Heart left ventricle (tissue), 16 donors: ENCODE measurements at regions of chr5 and their contacts with region 1.

Region 1: DNA sequence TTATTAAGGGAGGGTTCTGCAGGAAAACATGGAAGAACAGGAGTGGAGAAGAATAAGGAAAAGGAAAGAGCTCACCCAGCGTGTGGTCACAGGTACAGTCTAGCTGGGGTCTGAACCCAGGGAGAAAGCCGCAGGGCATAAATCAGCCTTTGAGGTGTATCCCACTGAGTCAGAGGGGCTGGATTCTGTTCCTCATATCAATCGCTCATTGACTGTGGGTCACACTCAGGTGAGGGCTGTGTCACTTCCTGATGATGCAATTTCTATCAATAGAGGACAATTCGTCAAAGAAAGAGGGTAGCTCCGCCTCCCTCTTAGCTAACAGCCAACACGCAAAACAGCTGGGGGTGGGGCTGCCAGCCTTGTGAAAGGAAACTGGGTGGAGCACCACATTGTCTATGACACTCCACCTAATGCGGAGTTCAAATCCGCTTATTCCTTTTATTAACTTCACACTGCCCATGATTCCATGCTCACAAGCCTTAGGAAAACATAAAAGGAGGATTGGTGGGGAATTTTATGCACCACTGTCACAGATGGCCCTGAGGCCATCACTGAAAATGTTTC is 176.2 kb downstream of the ICE1 start:
- DNase-seq: no peak
- ATAC-seq: no peak
- H3K4me3 ChIP-seq: no peak overlapping the region
- H3K27ac ChIP-seq: no peak overlapping the region
- H3K4me1 ChIP-seq: peaks cover 0 to 5% (median 0%) of the 10 kb centered on the region in 12 donors
- H3K27me3 ChIP-seq: no peaks in the 10 kb centered on the region
- CTCF ChIP-seq: no peak
- POLR2A ChIP-seq: no peak

Region 2: DNA sequence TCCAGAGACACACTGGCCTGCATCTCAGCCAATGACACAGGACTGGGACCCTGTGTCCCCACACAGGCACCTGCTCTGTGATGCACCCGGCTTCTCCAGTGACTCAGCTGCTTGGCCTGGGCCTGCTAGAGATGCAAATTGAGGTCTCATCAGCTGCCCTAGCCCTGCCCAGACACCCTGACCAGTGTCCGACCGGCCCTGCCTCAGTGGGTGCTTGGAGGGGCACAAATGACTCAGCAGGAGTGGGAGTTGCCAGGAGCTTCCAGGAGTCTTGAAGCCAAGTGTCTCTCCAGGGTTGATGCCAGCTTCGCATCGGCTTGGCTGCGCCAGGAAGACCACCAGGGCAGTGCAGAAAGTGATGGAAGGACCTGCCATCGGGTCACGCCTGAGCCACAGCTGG is 28.0 kb before region 1 on chr5:
- intact Hi-C with region 1: loop called in 1 of 10 experiments (anchors 1 kb)
- DNase-seq: no peak
- ATAC-seq: no peak
- H3K4me3 ChIP-seq: no peak overlapping the region
- H3K27ac ChIP-seq: no peak overlapping the region
- H3K4me1 ChIP-seq: peaks cover 0 to 8% (median 0%) of the 10 kb centered on the region in 12 donors
- H3K27me3 ChIP-seq: no peaks in the 10 kb centered on the region
- CTCF ChIP-seq: no peak
- POLR2A ChIP-seq: no peak

Region 3: DNA sequence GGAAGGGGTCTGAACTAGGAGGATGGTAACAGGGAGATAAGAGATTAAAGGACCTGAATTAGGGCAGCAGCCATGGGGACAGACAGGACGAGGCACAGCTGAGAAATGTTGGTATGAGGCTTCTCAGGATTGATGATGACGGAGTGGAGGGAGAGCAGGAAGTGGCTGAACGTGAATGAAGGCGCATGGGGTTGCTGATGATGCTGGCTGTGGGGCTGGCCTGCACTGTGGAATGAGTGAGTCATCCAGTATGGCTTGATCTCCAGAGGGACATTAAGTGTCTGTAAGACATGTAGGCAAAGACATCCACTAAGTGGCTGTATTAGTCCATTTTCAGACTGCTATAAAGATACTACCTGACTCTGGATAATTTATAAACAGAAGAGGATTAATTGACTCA is 80.3 kb after region 1 on chr5:
- intact Hi-C with region 1: loop called in 1 of 10 experiments (anchors 10 kb)
- DNase-seq: peak; percentile 49 to 68 (median 61)
- ATAC-seq: peak; percentile 82 to 95 (median 89)
- H3K4me3 ChIP-seq: no peak overlapping the region
- H3K27ac ChIP-seq: peak overlapping the region in 5 of 12 donors; percentile 18 to 60 (median 34)
- H3K4me1 ChIP-seq: peaks cover 0 to 15% (median 0%) of the 10 kb centered on the region in 12 donors
- H3K27me3 ChIP-seq: no peaks in the 10 kb centered on the region
- CTCF ChIP-seq: no peak
- POLR2A ChIP-seq: no peak

Region 4: DNA sequence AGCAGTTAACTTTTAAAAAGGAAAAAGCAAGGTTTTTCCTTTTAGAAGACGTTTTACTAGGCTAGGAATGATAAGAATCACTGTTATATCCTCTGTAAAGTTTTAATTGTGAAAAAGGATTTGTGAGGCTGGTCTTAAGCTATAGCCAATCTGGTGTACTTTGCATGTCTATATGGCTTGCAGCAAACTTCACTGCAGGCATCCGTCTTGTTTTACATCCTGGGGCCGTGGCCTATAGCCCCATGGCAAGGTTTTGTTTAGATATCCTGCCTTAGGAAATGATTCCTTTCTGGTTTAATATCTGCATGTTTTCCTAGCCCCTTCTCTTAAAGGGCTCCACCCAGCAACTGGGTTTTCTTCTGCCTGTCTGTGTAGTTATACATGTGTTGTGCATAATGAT is 96.6 kb after region 1 on chr5:
- intact Hi-C with region 1: no loop called
- DNase-seq: no peak
- ATAC-seq: no peak
- H3K4me3 ChIP-seq: no peak overlapping the region
- H3K27ac ChIP-seq: no peak overlapping the region
- H3K4me1 ChIP-seq: no peaks in the 10 kb centered on the region
- H3K27me3 ChIP-seq: no peaks in the 10 kb centered on the region
- CTCF ChIP-seq: no peak
- POLR2A ChIP-seq: no peak